Activated T-helper 1 cell treated with anti-CD3 and anti-CD28 coated beads, Interleukin-12 subunit alpha, Interleukin-12 subunit beta, Interleukin-2, Interleukin-4 antibody, amounts not matched to agents 30 ng/mL and 10 ng/mL and 1 ng/mL, durations not matched to agents 14 hours and 24 hours and 36 hours (primary cell): ENCODE measurements at regions of chr14 and their contacts with region 1.

Region 1: GRCh38 chr14:69766984-69767368 is at the start of gene SRSF5:
- DNase-seq: peak; percentile 92
- H3K4me3 Mint-ChIP-seq: peak within 1 kb of the TSS; percentile 94
- H3K27ac Mint-ChIP-seq: peak within 1 kb of the TSS; percentile 98
- H3K4me1 Mint-ChIP-seq: peaks cover 68% of the 10 kb centered on the region
- H3K27me3 Mint-ChIP-seq: peaks cover 2% of the 10 kb centered on the region
- total RNA-seq, gene SRSF5: 304 and 311 TPM in 2 replicates

Region 2: GRCh38 chr14:69153131-69153872 is 613.7 kb before region 1 on chr14:
- intact Hi-C with region 1: loop called (anchors 2 kb)
- DNase-seq: peak; percentile 90
- H3K4me3 Mint-ChIP-seq: peak overlapping the region; percentile 90
- H3K27ac Mint-ChIP-seq: peak overlapping the region; percentile 92
- H3K4me1 Mint-ChIP-seq: peaks cover 33% of the 10 kb centered on the region
- H3K27me3 Mint-ChIP-seq: peaks cover 39% of the 10 kb centered on the region

Region 3: DNA sequence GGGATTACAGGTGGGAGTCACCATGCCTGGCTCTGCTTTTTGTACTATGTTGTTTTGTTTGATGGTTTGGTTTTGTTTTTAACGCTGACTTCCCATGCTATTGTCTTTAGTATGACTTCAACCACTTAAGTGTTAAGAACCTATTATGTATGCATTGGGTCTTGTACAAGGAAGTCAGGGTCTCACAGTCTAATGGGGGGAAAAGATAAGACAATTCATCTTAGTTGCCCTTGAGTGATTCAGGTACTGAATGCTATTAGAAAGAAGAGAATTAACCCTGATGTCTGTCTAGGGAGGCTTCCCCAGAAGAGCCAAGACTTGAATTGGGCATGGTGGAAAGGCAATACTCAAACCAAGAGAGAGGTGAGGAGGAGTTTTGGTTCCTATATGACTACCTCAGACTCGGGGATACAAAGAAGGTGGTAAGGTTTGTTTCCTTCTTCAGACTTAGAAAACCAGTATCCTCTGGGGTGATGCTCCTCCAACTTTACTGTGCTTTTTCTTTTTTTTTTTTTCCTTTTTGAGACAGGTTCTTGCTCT is 91.0 kb before region 1 on chr14:
- intact Hi-C with region 1: loop called (anchors 1 kb)
- DNase-seq: peak; percentile 54
- H3K4me3 Mint-ChIP-seq: peak overlapping the region; percentile 68
- H3K27ac Mint-ChIP-seq: peak overlapping the region; percentile 98
- H3K4me1 Mint-ChIP-seq: peaks cover 78% of the 10 kb centered on the region
- H3K27me3 Mint-ChIP-seq: no peaks in the 10 kb centered on the region

Region 4: DNA sequence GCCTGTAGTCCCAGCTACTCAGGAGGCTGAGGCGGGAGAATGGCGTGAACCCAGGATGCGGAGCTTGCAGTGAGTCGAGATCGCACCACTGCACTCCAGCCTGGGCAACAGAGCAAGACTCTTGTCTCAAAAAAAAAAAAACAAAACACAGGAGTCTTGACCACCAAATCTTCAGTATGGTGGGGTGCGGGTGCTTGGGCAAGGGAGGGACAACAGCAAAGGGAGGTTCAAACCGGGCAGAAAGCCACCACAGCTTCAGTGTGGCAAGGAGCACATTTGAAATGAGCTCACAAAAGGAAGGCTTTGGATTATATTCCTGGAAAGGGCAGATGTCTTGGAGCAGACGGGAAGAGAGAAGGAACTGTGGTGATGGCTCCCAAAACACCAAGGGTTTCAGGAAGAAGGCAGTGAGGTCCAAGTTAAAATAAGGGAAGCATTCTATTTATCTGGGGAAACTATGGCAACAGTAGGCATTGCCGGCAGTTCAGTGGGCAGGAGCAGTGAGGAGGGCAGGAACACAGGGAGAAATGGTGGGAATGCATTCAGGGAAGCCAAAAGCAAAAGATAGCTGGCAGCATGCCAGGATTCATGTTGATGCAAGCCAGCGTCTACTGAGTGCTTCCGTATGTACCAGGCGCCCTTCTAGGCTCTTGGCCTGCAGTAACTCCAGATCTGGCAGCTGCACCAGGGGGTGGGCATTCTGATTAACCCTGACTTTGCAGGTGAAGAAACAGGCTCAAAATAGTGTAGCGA is 51.1 kb before region 1 on chr14:
- intact Hi-C with region 1: loop called (anchors 1 kb)
- DNase-seq: no peak
- H3K4me3 Mint-ChIP-seq: peak overlapping the region; percentile 46
- H3K27ac Mint-ChIP-seq: peak overlapping the region; percentile 92
- H3K4me1 Mint-ChIP-seq: peaks cover 94% of the 10 kb centered on the region
- H3K27me3 Mint-ChIP-seq: no peaks in the 10 kb centered on the region

Region 5: GRCh38 chr14:70013269-70013873 is 246.4 kb after region 1 on chr14:
- intact Hi-C with region 1: no loop called
- DNase-seq: no peak
- H3K4me3 Mint-ChIP-seq: no peak overlapping the region
- H3K27ac Mint-ChIP-seq: no peak overlapping the region
- H3K4me1 Mint-ChIP-seq: peaks cover 10% of the 10 kb centered on the region
- H3K27me3 Mint-ChIP-seq: peaks cover 9% of the 10 kb centered on the region

Region 6: GRCh38 chr14:70359181-70360090 is 592.5 kb after region 1 on chr14 and contains the start of gene COX16:
- intact Hi-C with region 1: loop called (anchors 10 kb)
- DNase-seq: peak; percentile 76
- H3K4me3 Mint-ChIP-seq: peak within 1 kb of the TSS; percentile 99
- H3K27ac Mint-ChIP-seq: peak within 1 kb of the TSS; percentile 71
- H3K4me1 Mint-ChIP-seq: peaks cover 21% of the 10 kb centered on the region
- H3K27me3 Mint-ChIP-seq: no peaks in the 10 kb centered on the region
- total RNA-seq, gene COX16: 67.3 and 67.7 TPM in 2 replicates